A549 (cell line): ENCODE measurements at regions of chr3 and their contacts with region 1.

Region 1: GRCh38 chr3:17841190-17841828 is 98.9 kb upstream of the TBC1D5 start:
- DNase-seq: peak; percentile 49 to 66
- ATAC-seq: peak; percentile 96 to 99
- H3K4me3 ChIP-seq: no peak overlapping the region
- H3K27ac ChIP-seq: 0 out of 6 replicates have a peak overlapping the region, but pooled peaks of 1 of the 2 experiments have one; percentile 20
- H3K4me1 ChIP-seq: no peaks in the 10 kb centered on the region
- CTCF ChIP-seq: peak; percentile 89
- EP300 ChIP-seq: no peak
- POLR2A ChIP-seq: no peak
- RAD21 ChIP-seq: peak; percentile 96

Region 2: GRCh38 chr3:17412950-17413530 is 428.3 kb before region 1 on chr3:
- CTCF ChIA-PET with region 1: interaction called, 10 read pairs
- POLR2A ChIA-PET with region 1: no interaction called
- DNase-seq: peak; percentile 27 to 74
- ATAC-seq: peak; percentile 78 to 89; a peak in 4 of 6 replicates
- H3K4me3 ChIP-seq: no peak overlapping the region
- H3K27ac ChIP-seq: no peak overlapping the region
- H3K4me1 ChIP-seq: no peaks in the 10 kb centered on the region
- CTCF ChIP-seq: peak; percentile 87
- EP300 ChIP-seq: no peak
- POLR2A ChIP-seq: no peak
- RAD21 ChIP-seq: peak; percentile 78 to 82

Region 3: DNA sequence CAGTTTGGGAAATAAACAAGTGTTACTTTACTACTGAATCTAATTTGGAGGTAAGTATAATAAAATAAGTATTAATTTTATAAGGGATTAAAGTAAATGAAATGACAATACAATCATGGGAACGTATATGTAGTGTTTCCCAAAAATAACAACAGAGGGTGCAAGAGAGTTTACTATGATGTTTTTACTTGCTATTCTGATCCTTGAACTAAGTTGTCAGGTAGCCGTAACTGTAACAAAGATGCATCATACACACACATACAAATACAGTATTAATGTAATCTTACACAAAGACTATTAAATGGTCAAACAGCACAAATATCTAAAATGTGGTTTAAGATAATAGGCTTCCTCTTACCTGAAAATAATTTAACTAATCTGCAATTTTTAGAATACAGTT is 410.3 kb before region 1 on chr3:
- CTCF ChIA-PET with region 1: interaction called, 21 read pairs
- POLR2A ChIA-PET with region 1: no interaction called
- DNase-seq: peak; percentile 20 to 60
- ATAC-seq: peak; percentile 64 to 83; a peak in 3 of 6 replicates
- H3K4me3 ChIP-seq: no peak overlapping the region
- H3K27ac ChIP-seq: no peak overlapping the region; a peak in 1 of 6 replicates
- H3K4me1 ChIP-seq: peaks cover 21% of the 10 kb centered on the region
- CTCF ChIP-seq: peak; percentile 70
- EP300 ChIP-seq: no peak
- POLR2A ChIP-seq: no peak
- RAD21 ChIP-seq: peak; percentile 78 to 80

Region 4: GRCh38 chr3:17645072-17645698 is 196.1 kb before region 1 on chr3:
- CTCF ChIA-PET with region 1: interaction called, 32 read pairs
- POLR2A ChIA-PET with region 1: no interaction called
- DNase-seq: peak; percentile 31 to 71
- ATAC-seq: peak; percentile 81 to 88
- H3K4me3 ChIP-seq: no peak overlapping the region
- H3K27ac ChIP-seq: peak overlapping the region in 1 of 2 experiments; percentile 27; a peak in 2 of 6 replicates
- H3K4me1 ChIP-seq: peaks cover 36% of the 10 kb centered on the region
- CTCF ChIP-seq: peak; percentile 69
- EP300 ChIP-seq: no peak
- POLR2A ChIP-seq: no peak
- RAD21 ChIP-seq: peak; percentile 57 to 58

Region 5: GRCh38 chr3:17742108-17742879 is 99.0 kb before region 1 on chr3 and contains the start of gene TBC1D5:
- CTCF ChIA-PET with region 1: interaction called, 7 read pairs
- POLR2A ChIA-PET with region 1: interaction called, 10 read pairs
- DNase-seq: peak; percentile 75 to 98
- ATAC-seq: peak; percentile 84 to 92
- H3K4me3 ChIP-seq: peak within 1 kb of the TSS; percentile 64
- H3K27ac ChIP-seq: peak within 1 kb of the TSS; percentile 96 to 100
- H3K4me1 ChIP-seq: peaks cover 25% of the 10 kb centered on the region
- CTCF ChIP-seq: no peak
- EP300 ChIP-seq: no peak
- POLR2A ChIP-seq: peak; percentile 73; the same call in 1 of the 2 replicates
- RAD21 ChIP-seq: no peak; a peak in 1 of 5 replicates
- polyA plus RNA-seq, gene TBC1D5: 67.3 and 72.2 TPM in 2 replicates

Region 6: GRCh38 chr3:17817545-17817944 is 23.8 kb before region 1 on chr3:
- CTCF ChIA-PET with region 1: interaction called, 10 read pairs
- POLR2A ChIA-PET with region 1: no interaction called
- DNase-seq: no peak
- ATAC-seq: no peak
- H3K4me3 ChIP-seq: no peak overlapping the region
- H3K27ac ChIP-seq: no peak overlapping the region
- H3K4me1 ChIP-seq: no peaks in the 10 kb centered on the region
- CTCF ChIP-seq: no peak
- EP300 ChIP-seq: no peak
- POLR2A ChIP-seq: no peak
- RAD21 ChIP-seq: no peak